Naive thymus-derived CD4-positive, alpha-beta T cell (primary cell): ENCODE measurements at regions of chr12 and their contacts with region 1.

Region 1: DNA sequence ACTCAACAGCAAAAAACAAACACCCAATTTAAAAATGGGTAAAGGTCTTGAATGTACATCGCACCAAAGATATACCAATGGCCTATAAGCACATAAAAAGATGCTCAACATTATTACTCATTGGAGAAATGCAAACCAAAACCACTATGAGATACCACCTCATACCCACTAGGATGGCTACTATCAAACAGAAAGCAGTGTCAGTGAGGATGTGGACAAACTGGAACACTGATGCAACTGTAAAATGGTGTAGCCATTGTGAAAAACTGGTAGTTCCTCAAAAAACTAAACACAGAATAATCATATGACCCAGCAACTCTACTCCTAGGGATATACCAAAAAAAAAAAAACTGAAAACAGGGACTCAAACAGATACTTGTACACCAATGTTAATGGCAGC is 49.3 kb downstream of the CDK17 start:
- DNase-seq: no peak
- ATAC-seq: peak; percentile 76
- H3K4me3 ChIP-seq: no peak overlapping the region
- H3K4me3 Mint-ChIP-seq: peak overlapping the region in 5 of 10 donors; percentile 15 to 55 (median 37)
- H3K27ac ChIP-seq: no peak overlapping the region
- H3K27ac Mint-ChIP-seq: peak overlapping the region in 5 of 9 donors; percentile 9 to 83 (median 39)
- H3K4me1 ChIP-seq: peaks cover 26 to 49% of the 10 kb centered on the region in 2 donors
- H3K4me1 Mint-ChIP-seq: peaks cover 61 to 95% (median 86%) of the 10 kb centered on the region in 7 donors
- H3K27me3 ChIP-seq: no peaks in the 10 kb centered on the region
- H3K27me3 Mint-ChIP-seq: no peaks in the 10 kb centered on the region

Region 2: DNA sequence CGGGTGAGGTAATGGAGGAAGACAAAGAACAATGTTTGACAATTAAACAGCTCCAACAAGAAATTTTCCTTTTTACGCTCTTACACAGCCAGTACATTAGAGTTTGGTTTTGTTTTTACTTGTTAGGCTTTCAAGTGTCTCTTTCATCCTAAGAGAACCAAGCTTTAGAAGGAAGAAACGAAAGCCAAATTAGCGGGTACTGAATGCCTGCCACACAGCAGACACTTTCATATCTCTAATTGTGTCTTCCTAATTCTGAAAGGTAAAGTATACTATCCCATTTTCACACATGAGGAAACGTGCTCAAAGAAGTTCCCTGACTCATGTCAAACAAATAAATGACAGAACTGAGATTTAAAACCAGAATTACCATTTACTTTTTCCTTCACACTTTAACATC is 15.7 kb before region 1 on chr12:
- CTCF ChIA-PET with region 1: interaction called, 3 read pairs
- POLR2A ChIA-PET with region 1: interaction called, 3 read pairs
- intact Hi-C with region 1: loop called in 1 of 2 experiments (anchors 2 kb)
- DNase-seq: peak in 6 of 9 donors; percentile 23 to 51 (median 34)
- ATAC-seq: peak; percentile 72
- H3K4me3 ChIP-seq: no peak overlapping the region
- H3K4me3 Mint-ChIP-seq: peak overlapping the region in 9 of 10 donors; percentile 27 to 74 (median 54)
- H3K27ac ChIP-seq: peak overlapping the region; percentile 34
- H3K27ac Mint-ChIP-seq: peak overlapping the region; percentile 30 to 87 (median 78)
- H3K4me1 ChIP-seq: peaks cover 7% of the 10 kb centered on the region in 2 donors
- H3K4me1 Mint-ChIP-seq: peaks cover 21 to 69% (median 60%) of the 10 kb centered on the region in 7 donors
- H3K27me3 ChIP-seq: no peaks in the 10 kb centered on the region
- H3K27me3 Mint-ChIP-seq: no peaks in the 10 kb centered on the region

Region 3: GRCh38 chr12:96361074-96361473 is 10.1 kb after region 1 on chr12:
- CTCF ChIA-PET with region 1: interaction called, 3 read pairs
- POLR2A ChIA-PET with region 1: no interaction called
- intact Hi-C with region 1: loop called (anchors 1 kb)
- DNase-seq: no peak
- ATAC-seq: no peak
- H3K4me3 ChIP-seq: no peak overlapping the region
- H3K4me3 Mint-ChIP-seq: peak overlapping the region in 4 of 10 donors; percentile 1 to 48 (median 28)
- H3K27ac ChIP-seq: no peak overlapping the region
- H3K27ac Mint-ChIP-seq: peak overlapping the region in 4 of 9 donors; percentile 8 to 59 (median 23)
- H3K4me1 ChIP-seq: peaks cover 21 to 57% of the 10 kb centered on the region in 2 donors
- H3K4me1 Mint-ChIP-seq: peaks cover 30 to 90% (median 84%) of the 10 kb centered on the region in 7 donors
- H3K27me3 ChIP-seq: no peaks in the 10 kb centered on the region
- H3K27me3 Mint-ChIP-seq: no peaks in the 10 kb centered on the region